SK-N-SH (cell line): ENCODE measurements at regions of chr15 and their contacts with region 1.

Region 1: GRCh38 chr15:64681424-64682024 is 93.9 kb downstream of the RBPMS2 start:
- DNase-seq: peak; percentile 89
- H3K4me3 ChIP-seq: no peak overlapping the region
- H3K27ac ChIP-seq: no peak overlapping the region; a peak in 1 of 4 replicates
- H3K4me1 ChIP-seq: no peaks in the 10 kb centered on the region
- H3K27me3 ChIP-seq: no peaks in the 10 kb centered on the region
- CTCF ChIP-seq: peak; percentile 74
- EP300 ChIP-seq: no peak
- RAD21 ChIP-seq: peak; percentile 98

Region 2: GRCh38 chr15:64162870-64163658 is 518.5 kb before region 1 on chr15 and contains the start of gene PPIB:
- CTCF ChIA-PET with region 1: interaction called, 12 read pairs
- POLR2A ChIA-PET with region 1: no interaction called
- DNase-seq: peak; percentile 98
- H3K4me3 ChIP-seq: peak within 1 kb of the TSS; percentile 71 to 85
- H3K27ac ChIP-seq: peak within 1 kb of the TSS; percentile 79 to 83
- H3K4me1 ChIP-seq: peaks cover 23 to 25% of the 10 kb centered on the region in 2 experiments; a peak in 3 of 4 replicates
- H3K27me3 ChIP-seq: no peaks in the 10 kb centered on the region
- CTCF ChIP-seq: peak; percentile 54
- EP300 ChIP-seq: peak in 1 of 2 experiments; percentile 66; a peak in 1 of 4 replicates
- RAD21 ChIP-seq: peak; percentile 84
- polyA plus RNA-seq, gene PPIB: 1,358 and 1,379 TPM in 2 replicates

Region 3: DNA sequence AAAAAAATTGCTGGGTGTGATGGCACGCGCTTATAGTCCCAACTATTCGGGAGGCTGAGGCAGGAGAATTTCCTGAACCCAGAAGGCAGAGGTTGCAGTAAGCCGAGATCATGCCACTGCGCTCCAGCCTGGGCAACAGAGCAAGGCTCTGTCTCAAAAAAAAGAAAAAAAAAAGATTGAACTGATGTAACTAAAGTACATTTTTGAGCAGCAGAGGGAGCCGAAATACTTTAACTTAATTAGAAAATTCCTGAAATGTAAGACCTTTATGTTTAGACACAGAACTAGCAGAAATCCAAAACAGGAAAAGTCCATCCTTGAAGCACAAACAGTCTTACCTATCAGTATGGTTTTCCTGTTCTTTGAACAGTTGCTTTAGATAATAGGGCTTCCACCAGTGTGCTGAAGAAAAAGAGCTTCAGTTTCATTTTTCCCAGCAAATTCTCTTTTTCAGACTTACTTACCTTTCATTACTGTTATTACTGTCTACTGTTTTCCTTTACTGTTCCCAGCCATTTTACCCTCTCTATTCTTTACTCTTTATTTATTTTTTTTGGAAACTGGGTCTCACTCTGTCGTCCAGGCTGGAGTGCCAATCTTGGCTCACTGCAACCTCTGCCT is 254.6 kb before region 1 on chr15:
- CTCF ChIA-PET with region 1: interaction called, 24 read pairs
- POLR2A ChIA-PET with region 1: no interaction called
- DNase-seq: no peak
- H3K4me3 ChIP-seq: no peak overlapping the region; a peak in 1 of 4 replicates
- H3K27ac ChIP-seq: peak overlapping the region in 1 of 2 experiments; percentile 33; a peak in 1 of 4 replicates
- H3K4me1 ChIP-seq: peaks cover 0 to 18% of the 10 kb centered on the region in 2 experiments; a peak in 1 of 4 replicates
- H3K27me3 ChIP-seq: no peaks in the 10 kb centered on the region
- CTCF ChIP-seq: peak; percentile 50
- EP300 ChIP-seq: no peak
- RAD21 ChIP-seq: peak; percentile 51

Region 4: GRCh38 chr15:64596701-64597476 is 84.6 kb before region 1 on chr15:
- CTCF ChIA-PET with region 1: no interaction called
- POLR2A ChIA-PET with region 1: no interaction called
- DNase-seq: no peak
- H3K4me3 ChIP-seq: no peak overlapping the region
- H3K27ac ChIP-seq: peak overlapping the region; percentile 53 to 68; a peak in 3 of 4 replicates
- H3K4me1 ChIP-seq: peaks cover 14 to 29% of the 10 kb centered on the region in 2 experiments
- H3K27me3 ChIP-seq: no peaks in the 10 kb centered on the region
- CTCF ChIP-seq: no peak
- EP300 ChIP-seq: no peak
- RAD21 ChIP-seq: no peak

Region 5: GRCh38 chr15:64695561-64695992 is 14.1 kb after region 1 on chr15:
- CTCF ChIA-PET with region 1: interaction called, 28 read pairs
- POLR2A ChIA-PET with region 1: interaction called, 3 read pairs
- DNase-seq: peak; percentile 39
- H3K4me3 ChIP-seq: no peak overlapping the region
- H3K27ac ChIP-seq: peak overlapping the region in 1 of 2 experiments; percentile 92; a peak in 2 of 4 replicates
- H3K4me1 ChIP-seq: peaks cover 28 to 60% of the 10 kb centered on the region in 2 experiments
- H3K27me3 ChIP-seq: no peaks in the 10 kb centered on the region
- CTCF ChIP-seq: no peak
- EP300 ChIP-seq: peak in 1 of 2 experiments; percentile 72; a peak in 1 of 4 replicates
- RAD21 ChIP-seq: no peak

Region 6: GRCh38 chr15:64717735-64718495 is 36.4 kb after region 1 on chr15:
- CTCF ChIA-PET with region 1: interaction called, 21 read pairs
- POLR2A ChIA-PET with region 1: no interaction called
- DNase-seq: no peak
- H3K4me3 ChIP-seq: no peak overlapping the region
- H3K27ac ChIP-seq: no peak overlapping the region
- H3K4me1 ChIP-seq: no peaks in the 10 kb centered on the region; a peak in 1 of 4 replicates
- H3K27me3 ChIP-seq: no peaks in the 10 kb centered on the region
- CTCF ChIP-seq: no peak
- EP300 ChIP-seq: no peak
- RAD21 ChIP-seq: no peak